ENCODE measurements at regions of chr1 and their contacts with region 1.

Region 1: DNA sequence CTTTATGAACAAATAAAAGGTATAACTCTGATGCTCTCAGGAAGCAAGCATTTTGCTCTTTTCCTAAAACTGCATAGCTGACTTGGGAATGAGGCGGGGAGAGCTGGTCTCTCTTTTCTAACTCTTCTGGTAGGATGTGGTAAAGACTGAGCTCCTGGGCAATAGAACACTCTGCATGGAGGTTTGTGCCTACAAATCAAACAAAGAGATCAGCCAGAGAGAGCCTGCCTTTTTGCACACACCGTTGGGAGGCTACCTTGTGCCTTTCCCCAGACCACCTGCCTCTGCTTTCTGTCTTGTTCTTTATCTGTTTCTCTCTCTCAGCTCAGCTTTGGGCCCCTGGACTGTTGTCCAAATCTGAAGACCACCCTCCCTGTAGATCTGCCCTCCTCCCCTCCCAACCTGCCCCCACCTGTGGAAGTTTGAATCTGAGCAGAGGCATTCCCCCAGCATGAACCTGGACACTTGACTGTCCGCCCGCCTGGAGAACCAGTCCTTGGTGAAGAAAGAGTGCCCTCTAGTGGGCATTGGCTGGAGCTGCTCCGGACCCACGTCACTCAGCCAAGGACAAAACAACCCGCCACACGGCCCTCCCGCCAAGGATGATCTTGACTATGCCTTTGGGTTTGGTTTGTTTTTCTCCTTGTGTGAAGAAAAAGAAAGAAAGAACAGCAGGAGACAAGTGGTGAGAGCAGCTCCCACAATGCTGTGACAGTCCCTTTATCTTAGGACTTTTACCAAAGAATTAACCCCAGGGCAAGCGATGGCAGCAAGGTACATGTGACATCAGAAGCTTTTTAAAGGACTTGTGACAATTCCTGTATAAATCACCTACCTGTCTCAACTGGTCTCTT is 228.2 kb downstream of the PBX1 start:
- DNase-seq: peak; percentile 81
- ATAC-seq: peak; percentile 85 to 91

Region 2: DNA sequence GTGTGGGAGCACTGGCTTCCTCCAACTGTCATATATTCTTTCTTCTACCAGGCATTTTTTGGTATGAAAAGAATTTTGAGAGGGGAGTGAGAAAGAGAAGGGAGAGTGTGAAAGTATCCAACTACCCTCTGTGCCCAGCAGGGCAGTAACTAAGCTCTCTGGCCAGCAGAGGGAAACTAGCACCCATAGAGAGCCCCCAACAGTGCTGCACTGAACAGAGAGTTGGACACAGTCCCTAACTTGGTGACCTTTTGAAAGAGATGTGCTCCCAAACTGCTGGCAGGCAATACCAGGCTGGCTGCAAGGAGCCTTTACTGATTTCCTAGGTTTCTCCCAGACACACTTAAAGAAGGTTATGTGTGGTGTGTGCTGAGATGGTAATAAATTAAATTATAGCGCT is 347.0 kb before region 1 on chr1:
- intact Hi-C with region 1: loop called in 1 of 2 experiments (anchors 2 kb)
- DNase-seq: peak; percentile 17
- ATAC-seq: peak; percentile 93 to 97

Region 3: DNA sequence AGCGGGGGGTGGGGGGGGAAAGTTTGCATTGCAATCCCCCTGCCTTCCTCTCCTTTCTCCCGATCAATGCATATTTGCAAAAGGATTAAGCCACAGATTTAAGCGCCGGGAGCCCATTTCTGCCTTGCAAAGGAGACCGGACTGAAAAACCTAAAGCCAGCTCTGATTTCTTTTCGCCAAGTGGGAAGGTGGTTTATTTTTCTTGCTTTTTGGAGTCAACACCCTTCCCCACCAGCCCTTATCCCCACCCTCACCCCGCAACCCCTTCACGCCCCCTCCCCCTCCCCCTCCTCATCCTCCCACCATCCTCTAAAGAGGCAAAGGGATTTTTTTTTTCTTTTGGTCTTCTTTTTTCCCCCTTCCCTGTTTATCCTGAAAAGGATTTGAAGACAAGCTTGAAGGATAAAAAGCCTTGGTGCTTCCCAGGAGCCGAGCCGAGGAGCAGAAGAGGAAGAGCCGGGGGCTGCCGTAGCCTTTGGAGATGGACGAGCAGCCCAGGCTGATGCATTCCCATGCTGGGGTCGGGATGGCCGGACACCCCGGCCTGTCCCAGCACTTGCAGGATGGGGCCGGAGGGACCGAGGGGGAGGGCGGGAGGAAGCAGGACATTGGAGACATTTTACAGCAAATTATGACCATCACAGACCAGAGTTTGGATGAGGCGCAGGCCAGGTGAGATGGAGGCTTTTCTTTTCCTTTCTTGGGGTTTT is 227.7 kb before region 1 on chr1:
- intact Hi-C with region 1: loop called (anchors 2 to 10 kb)
- DNase-seq: peak; percentile 44
- ATAC-seq: peak; percentile 39 to 41

Region 4: DNA sequence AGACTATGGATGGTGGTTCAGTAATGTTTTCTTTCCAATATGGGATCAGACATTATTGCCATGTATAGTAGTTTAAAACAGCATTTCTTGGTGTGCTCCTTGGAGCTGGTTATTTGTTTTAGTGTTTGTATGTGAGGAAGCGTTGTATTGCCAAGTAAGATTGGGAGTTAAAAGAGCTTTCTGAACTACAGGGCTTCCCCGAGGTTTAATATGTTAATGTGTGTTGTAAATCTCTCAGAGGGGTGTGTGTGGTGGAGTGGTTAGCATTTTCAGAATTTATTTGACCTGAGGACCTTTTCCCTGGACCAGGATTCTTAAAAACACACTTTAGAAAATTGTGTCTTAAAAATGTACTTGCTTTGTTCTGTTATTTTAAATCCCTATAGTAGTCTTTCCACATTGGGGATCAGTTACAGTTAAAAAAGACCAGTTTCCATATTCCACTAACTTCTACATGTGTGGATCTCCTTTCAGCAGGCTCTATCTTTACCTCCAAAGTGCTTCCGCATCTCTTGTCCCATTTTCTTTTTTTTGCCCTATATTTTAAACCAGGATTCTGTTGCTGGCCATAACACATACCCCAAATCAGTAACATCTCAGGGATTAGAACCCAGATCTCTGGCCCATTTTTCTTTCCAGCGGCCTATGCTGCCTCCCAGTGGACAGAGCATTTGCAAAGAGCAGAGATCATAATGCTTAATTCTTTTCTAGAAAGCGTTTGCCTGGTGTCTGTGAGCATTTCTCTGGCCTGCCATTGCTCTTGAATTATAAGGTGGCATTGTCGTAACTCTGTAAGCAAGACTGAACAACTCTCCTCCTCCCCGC is 169.6 kb before region 1 on chr1:
- intact Hi-C with region 1: loop called in 1 of 2 experiments (anchors 10 kb)
- DNase-seq: no peak
- ATAC-seq: no peak

Region 5: DNA sequence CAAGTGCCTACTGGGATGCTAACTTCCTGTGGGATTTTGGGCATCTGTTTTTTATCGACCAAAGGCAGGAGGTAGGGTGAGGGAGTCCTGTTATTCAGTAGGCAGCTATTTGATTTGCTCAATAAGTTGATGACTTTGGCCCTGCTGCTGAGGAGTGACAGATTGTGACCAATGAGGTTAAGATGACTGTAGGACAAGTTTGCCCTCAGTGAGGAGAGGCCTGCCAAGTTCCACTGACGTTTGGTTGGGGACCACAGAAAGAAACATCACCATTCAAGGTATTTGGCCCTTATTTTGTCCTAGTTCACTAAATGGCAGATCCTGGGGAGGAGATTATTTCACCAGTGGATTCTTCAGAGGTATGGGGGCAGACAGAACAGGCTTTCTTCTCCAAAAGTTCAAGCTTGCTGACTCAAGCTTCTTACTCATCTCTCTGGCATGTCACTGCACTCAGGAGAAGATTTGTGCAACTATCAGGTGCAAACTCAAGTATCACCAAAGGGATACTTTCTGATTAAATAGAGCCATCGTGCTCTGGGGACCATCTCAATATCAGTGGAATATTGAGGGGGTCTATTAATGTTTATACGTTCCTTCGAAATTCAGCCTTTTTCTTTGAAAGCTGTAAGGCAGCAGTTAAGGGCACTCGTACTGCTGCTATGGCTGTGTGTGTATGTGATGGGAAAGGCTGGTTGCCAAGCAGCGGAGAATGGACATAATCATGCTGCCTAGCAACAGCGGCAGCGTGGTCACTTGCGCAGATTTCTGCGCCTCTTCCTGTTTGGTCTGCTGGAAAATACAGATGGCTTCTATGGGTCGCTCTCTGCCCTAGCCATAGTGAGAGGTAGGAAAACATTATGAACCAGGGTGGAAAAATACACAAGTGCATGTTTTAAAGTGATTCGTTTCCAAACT is 149.5 kb before region 1 on chr1:
- intact Hi-C with region 1: loop called in 1 of 2 experiments (anchors 5 kb)
- DNase-seq: peak; percentile 78
- ATAC-seq: peak; percentile 36 to 78

Region 6: GRCh38 chr1:164914208-164914607 is 127.0 kb after region 1 on chr1:
- intact Hi-C with region 1: loop called in 1 of 2 experiments (anchors 5 kb)
- DNase-seq: no peak
- ATAC-seq: peak; percentile 84 to 89

Region 7: GRCh38 chr1:165073185-165074007 is 286.2 kb after region 1 on chr1:
- intact Hi-C with region 1: loop called in 1 of 2 experiments (anchors 10 kb)
- DNase-seq: no peak
- ATAC-seq: peak; percentile 67 to 68